PC-3 (cell line): ENCODE measurements at regions of chr10 and their contacts with region 1.

Region 1: GRCh38 chr10:37520488-37520887 is 336.9 kb downstream of the ZNF248 start:
- DNase-seq: no peak
- ATAC-seq: no peak
- H3K4me3 ChIP-seq: no peak overlapping the region
- H3K27ac ChIP-seq: no peak overlapping the region
- H3K4me1 ChIP-seq: no peaks in the 10 kb centered on the region
- H3K27me3 ChIP-seq: no peaks in the 10 kb centered on the region
- CTCF ChIP-seq: no peak

Region 2: DNA sequence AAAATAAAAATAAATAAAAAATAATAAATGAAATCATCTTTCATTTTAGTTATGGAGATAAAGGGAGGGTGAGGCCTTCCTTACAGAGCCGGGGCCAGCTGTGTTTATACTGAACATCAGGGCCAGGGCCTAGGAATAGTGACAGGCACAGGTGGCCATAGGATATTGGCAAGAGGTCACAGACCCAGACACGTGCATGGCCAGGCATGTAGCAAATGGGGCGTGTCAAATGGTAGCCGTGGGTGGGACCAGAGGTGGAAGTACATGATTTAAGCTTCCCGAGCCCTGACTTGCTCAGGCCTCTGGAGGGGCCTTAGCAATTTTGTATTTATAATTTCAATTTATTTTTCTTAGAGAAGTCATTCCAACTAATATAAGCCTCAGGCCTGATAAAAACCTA is 42.1 kb before region 1 on chr10:
- CTCF ChIA-PET with region 1: no interaction called
- POLR2A ChIA-PET with region 1: no interaction called
- intact Hi-C with region 1: no loop called
- DNase-seq: no peak
- ATAC-seq: no peak
- H3K4me3 ChIP-seq: no peak overlapping the region
- H3K27ac ChIP-seq: no peak overlapping the region
- H3K4me1 ChIP-seq: peaks cover 7% of the 10 kb centered on the region
- H3K27me3 ChIP-seq: no peaks in the 10 kb centered on the region
- CTCF ChIP-seq: no peak

Region 3: DNA sequence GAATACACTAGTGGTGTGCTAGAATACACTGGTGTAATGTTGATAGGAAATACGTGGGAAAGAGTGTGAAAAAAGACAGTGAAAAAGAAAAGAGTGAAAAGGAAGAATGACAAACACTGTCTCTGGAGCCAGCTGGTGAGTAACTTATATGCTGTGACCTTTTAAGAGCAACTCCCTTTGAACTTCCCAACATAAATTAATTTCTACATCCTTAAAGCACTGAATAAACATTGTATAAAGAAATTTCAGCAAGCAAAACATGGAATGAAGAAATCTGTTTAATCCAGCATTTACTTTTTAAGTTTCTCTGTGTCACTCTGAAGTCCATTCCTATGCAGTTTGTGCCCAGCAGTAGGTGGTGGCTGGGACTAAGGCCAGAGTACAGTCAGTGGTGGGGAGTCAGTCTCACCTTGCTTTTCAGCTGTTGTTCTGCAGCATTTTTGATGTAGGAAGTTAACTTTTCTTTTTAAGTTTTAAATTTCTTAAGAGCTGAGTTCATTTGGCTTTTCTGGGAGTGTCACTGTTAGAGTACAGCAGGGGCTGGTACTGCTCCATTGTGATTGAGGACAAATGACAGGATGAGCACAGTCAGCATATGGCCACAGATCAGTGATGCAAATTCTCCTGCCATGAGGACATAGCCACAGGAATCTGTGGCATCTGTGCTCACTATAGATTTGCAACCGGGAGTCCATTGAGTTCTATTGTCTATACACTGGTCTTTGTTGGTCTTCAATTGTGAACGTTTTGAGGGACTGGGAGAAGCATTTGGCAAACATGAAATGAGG is 15.2 kb after region 1 on chr10:
- CTCF ChIA-PET with region 1: no interaction called
- POLR2A ChIA-PET with region 1: no interaction called
- intact Hi-C with region 1: no loop called
- DNase-seq: peak; percentile 83
- ATAC-seq: peak; percentile 75
- H3K4me3 ChIP-seq: no peak overlapping the region
- H3K27ac ChIP-seq: no peak overlapping the region
- H3K4me1 ChIP-seq: peaks cover 13% of the 10 kb centered on the region
- H3K27me3 ChIP-seq: no peaks in the 10 kb centered on the region
- CTCF ChIP-seq: no peak

Region 4: DNA sequence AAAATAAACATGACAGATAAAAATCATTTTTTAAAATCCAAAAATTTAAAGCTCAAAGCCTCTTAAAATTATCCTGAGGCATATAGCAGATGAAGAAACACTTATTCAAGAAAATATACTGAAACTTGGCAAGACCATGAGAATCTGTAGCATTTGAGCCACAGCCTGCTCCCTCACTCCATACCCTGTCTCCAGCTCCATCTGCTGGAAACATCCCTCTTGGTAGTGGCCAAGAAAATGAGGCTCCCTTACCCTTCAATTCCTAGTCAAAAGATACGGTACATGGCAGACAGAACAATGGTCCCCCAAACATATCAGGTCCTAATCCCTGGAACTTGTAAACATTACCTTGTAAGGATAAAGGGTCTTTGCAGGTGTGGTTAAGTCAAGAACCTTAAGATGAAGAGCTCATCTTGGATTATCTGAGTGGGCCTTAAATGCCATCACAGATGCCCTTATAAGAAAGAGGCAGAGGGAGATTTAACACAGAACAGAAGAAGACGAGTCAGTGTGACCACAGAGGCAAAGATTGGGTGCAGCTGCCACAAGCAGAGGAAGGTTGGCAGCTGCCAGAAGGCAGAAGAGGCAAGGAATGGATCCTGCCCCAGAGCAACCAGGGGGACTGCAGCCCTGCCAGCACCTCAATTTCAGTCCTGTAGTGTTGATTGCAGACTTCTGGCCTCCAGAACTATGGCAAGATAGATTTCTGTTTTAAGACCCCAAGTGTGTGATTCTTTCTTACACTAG is 187.5 kb after region 1 on chr10:
- CTCF ChIA-PET with region 1: interaction called, 3 read pairs
- POLR2A ChIA-PET with region 1: no interaction called
- intact Hi-C with region 1: loop called (anchors 1 kb)
- DNase-seq: peak; percentile 44
- ATAC-seq: peak; percentile 51
- H3K4me3 ChIP-seq: no peak overlapping the region
- H3K27ac ChIP-seq: no peak overlapping the region
- H3K4me1 ChIP-seq: peaks cover 6% of the 10 kb centered on the region
- H3K27me3 ChIP-seq: no peaks in the 10 kb centered on the region
- CTCF ChIP-seq: peak; percentile 62; the same call in 1 of the 2 replicates

Region 5: GRCh38 chr10:37747081-37747480 is 226.6 kb after region 1 on chr10:
- CTCF ChIA-PET with region 1: no interaction called
- POLR2A ChIA-PET with region 1: no interaction called
- intact Hi-C with region 1: no loop called
- DNase-seq: no peak
- ATAC-seq: no peak
- H3K4me3 ChIP-seq: no peak overlapping the region
- H3K27ac ChIP-seq: no peak overlapping the region
- H3K4me1 ChIP-seq: peaks cover 12% of the 10 kb centered on the region
- H3K27me3 ChIP-seq: no peaks in the 10 kb centered on the region
- CTCF ChIP-seq: no peak